ENCODE measurements at regions of chr1 and their contacts with region 1.

Region 1: DNA sequence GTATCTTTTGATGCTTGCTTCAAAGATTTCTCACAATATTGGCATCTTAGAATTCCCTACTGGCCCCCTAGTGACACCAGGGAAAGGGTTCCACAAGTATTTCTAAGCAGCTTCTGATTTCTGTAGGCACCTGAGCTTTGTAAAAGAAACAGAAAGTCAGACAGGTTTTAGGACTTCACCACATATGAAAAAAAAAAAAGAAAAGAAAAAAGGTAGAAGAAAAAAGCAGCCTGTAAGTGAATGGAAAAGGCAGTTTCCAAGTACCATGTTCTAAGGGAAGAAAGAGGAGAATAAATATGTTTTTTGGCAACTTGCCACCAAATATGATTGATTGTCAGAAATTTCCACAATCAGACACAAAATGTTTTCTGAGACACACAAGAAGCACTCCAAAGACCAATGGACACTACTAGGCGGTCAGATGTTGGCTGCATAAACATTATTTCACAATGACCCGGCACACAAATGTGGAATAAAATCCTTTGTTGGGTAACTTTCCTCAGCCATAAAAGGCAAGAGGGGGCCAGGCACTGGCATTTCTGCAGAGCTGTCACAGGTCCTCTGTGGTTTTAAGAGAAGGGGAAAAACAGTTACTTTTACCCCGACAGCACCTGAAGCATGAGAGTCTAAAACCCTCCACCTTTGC is 12.7 kb upstream of the CPLANE2 start:
- DNase-seq: peak; percentile 14
- ATAC-seq: no peak
- H3K4me3 ChIP-seq: no peak overlapping the region
- H3K27ac ChIP-seq: no peak overlapping the region
- H3K4me1 ChIP-seq: peaks cover 55% of the 10 kb centered on the region
- H3K27me3 ChIP-seq: no peaks in the 10 kb centered on the region
- CTCF ChIP-seq: no peak

Region 2: DNA sequence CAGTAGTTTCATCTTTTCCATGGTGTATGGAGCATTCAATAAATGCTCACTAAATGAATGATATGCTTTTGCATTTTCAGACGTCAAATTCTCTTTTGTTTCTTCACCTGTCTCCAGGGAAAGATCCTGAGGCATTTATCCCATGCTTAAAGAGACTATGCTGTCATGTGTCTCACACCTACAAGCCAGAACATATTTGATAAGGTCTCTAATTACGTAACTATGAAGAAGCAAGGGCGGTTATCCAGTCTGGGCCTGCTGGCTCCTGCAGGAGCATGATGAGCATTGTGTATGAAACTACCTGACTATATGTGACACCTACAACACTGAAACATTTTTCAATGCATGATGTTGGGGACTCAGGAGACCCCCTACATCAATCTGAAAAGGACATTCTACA is 50.7 kb after region 1 on chr1:
- CTCF ChIA-PET with region 1: interaction called, 13 read pairs
- POLR2A ChIA-PET with region 1: no interaction called
- intact Hi-C with region 1: no loop called
- DNase-seq: no peak
- ATAC-seq: peak; percentile 39
- H3K4me3 ChIP-seq: no peak overlapping the region
- H3K27ac ChIP-seq: no peak overlapping the region
- H3K4me1 ChIP-seq: no peaks in the 10 kb centered on the region
- H3K27me3 ChIP-seq: no peaks in the 10 kb centered on the region
- CTCF ChIP-seq: no peak

Region 3: GRCh38 chr1:16324456-16324890 is 74.8 kb after region 1 on chr1:
- CTCF ChIA-PET with region 1: no interaction called
- POLR2A ChIA-PET with region 1: no interaction called
- intact Hi-C with region 1: loop called (anchors 2 kb)
- DNase-seq: peak; percentile 79
- ATAC-seq: peak; percentile 94
- H3K4me3 ChIP-seq: no peak overlapping the region
- H3K27ac ChIP-seq: no peak overlapping the region
- H3K4me1 ChIP-seq: peaks cover 18% of the 10 kb centered on the region
- H3K27me3 ChIP-seq: no peaks in the 10 kb centered on the region
- CTCF ChIP-seq: no peak

Region 4: DNA sequence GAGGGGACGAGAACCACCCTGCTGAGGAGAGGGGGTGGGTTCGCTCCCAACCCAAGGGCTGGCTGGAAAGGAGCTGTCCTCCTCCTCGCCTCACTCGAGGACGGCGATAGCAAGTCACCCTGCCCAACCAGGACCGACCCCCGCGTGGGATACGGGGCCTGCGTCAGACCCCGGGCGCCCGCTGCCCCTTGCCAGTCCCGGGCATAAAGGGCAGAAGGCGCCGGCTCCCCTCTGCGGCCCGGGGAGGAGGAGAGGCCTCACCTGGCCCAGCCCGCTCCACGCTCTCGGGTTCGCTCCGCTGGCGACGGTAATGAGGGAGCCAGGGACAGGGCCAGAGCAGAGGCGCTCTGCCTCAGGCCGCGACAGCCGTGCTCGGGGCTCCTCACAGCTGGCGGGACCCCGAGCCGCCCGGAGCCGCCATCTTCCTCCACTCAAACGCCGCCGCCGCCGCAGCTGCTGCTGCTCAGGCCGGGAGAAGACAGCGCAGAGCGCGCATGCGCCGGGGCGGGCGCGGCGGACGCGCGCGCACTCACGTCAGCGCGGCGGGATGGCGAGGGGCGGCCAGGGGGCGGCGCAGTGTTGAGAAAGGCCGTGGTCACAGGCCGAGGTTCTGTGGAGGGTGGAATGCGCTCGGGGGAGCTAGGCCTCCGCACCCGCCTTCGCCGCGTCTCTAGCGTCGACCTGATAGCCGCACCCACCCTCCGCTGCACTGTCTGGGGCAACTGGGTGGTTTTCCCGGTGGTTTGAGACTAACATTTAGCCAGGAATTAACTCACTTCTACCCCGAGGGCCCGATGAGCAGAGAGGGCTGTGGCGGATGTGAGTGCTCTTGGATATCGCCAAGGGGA is 102.5 kb after region 1 on chr1 and contains the start of gene FBXO42:
- CTCF ChIA-PET with region 1: interaction called, 7 read pairs
- POLR2A ChIA-PET with region 1: interaction called, 3 read pairs
- intact Hi-C with region 1: loop called (anchors 5 kb)
- DNase-seq: peak; percentile 92
- ATAC-seq: peak; percentile 79
- H3K4me3 ChIP-seq: peak within 1 kb of the TSS; percentile 79
- H3K27ac ChIP-seq: peak within 1 kb of the TSS; percentile 65
- H3K4me1 ChIP-seq: peaks cover 34% of the 10 kb centered on the region
- H3K27me3 ChIP-seq: no peaks in the 10 kb centered on the region
- CTCF ChIP-seq: peak; percentile 53
- total RNA-seq, gene FBXO42: 13.1 and 16.0 TPM in 2 replicates